ENCODE measurements at regions of chr4 and their contacts with region 1.

Region 1: DNA sequence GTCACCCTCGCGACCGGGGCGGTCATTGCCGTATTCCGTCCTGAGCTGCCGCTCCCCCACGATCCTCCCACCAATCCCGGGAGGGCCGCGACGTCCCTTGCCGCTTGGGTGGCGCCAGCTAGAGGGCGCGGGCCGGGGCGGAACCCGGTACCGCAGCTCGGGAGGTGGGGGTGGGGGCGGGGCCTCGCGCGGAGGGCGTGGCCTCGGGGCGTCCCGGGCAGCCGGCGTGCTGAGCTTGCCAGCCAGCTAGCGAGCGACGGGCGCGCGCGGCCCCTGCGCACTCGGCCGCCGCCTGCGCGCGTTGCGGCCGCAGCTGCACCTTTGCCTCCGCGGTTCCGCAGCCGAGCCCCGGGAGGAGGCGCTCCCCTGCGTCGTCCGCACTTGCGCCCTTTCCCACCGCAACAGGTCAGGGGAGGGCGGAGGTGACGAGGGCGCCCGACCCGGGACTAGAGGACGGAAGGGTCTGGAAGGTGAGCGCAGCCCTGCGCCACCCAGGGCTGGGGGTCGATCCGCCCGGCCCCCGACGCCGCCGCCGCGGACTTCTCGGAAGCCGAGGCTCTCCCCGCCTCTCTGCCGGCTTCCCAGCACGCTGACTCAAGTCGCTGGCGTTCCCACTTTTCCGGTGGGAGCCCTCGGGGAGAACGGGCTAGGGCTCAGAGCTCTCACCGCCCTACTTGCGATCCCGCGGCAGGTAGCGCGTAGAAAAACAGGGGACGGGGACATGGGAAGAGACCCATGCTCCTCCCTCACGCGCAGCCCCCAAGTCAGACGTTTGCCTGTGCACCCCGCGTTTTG is at the start of gene AFF1:
- DNase-seq: peak; percentile 96
- total RNA-seq, gene AFF1: 63.4 TPM

Region 2: DNA sequence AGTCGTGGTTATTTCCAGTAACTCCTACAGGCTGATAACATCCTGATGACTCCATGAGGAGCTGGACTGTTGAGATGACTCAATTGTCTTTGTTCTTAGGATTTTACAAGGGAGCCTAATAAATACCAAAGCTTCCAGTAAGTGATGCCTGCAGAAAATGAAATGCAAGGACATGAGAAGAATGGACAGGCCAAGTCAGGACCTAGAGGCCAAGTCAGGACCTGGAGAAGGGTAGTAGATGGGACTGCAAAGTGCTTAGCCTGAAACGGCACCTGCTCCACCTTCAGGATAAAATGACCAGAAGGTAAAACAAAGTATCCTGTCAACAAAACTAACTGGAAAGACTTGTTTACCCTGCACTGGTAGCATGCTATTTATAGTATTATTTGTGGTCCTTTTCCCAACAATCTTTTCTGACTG is 79.4 kb before region 1 on chr4:
- intact Hi-C with region 1: no loop called
- DNase-seq: no peak

Region 3: DNA sequence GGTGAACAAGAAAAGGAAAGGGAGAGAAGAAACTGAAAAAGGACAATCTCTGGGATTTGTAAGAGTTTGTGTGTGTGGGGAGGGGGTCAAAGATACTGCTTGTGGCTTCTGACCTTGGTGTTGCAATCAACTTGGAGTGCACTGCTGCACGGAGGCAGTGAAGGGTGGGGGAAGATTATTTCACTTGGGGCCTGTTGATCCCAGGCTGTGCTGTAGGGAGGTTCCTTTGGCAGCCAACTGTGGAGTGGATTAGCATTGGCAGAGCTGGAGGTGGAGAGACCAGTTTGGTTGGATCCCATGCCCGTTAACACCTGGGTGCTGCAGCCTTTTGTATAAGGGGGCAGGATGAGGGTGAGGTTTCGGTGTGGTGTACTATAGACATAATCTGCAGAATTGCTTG is 38.0 kb after region 1 on chr4:
- intact Hi-C with region 1: no loop called
- DNase-seq: no peak

Region 4: GRCh38 chr4:87093443-87094123 is 158.6 kb after region 1 on chr4:
- intact Hi-C with region 1: loop called (anchors 2 kb)
- DNase-seq: no peak

Region 5: DNA sequence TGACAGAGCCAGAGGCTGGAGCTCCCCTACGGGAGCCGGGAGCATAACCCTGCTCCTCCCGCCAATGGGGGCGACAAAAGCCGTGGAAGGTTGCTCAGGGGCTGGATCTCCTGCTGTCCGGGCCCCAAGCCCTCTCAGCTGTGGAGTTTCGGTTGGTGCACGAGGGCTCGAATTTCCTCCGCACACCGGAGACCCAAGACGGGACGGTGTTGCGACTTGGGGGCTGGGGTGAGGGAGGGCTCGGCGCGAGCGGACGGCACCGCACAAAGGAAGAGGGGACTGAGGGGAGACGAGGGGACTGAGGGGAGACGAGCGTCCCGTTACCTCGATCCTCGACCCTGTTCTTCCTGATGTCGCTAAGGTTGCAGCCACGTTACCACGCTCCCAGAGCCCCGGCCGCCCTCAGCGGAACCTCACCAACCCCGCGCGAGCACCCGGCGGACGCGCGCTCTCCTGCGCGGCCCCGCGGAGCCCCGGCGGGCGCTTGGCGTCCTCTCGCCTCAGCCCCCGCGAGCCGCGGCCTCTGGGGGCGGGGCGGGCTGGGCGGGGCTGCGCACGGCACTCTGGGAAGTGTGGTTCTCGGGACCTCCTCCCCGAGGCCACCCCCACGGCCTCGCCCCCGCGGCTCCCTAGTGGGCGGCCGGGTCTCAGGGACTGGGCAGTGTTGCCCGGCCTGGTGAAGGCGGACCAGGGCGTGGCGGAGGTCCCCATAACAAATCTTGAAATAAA is 285.3 kb after region 1 on chr4 and contains the start of gene KLHL8:
- intact Hi-C with region 1: loop called (anchors 5 kb)
- DNase-seq: peak; percentile 94
- total RNA-seq, gene KLHL8: 11.2 TPM

Measured in cardiac septum (tissue), 1 donor.